Naive thymus-derived CD4-positive, alpha-beta T cell (primary cell): ENCODE measurements at regions of chr2 and their contacts with region 1.

Region 1: GRCh38 chr2:54723131-54723995 is at the start of gene EML6:
- DNase-seq: peak; percentile 94 to 99 (median 98)
- ATAC-seq: peak; percentile 98
- H3K4me3 ChIP-seq: peak within 1 kb of the TSS; percentile 77
- H3K4me3 Mint-ChIP-seq: peak within 1 kb of the TSS; percentile 87 to 97 (median 92)
- H3K27ac ChIP-seq: peak within 1 kb of the TSS; percentile 70
- H3K27ac Mint-ChIP-seq: peak within 1 kb of the TSS; percentile 50 to 90 (median 71)
- H3K4me1 ChIP-seq: peaks cover 0 to 6% of the 10 kb centered on the region in 2 donors
- H3K4me1 Mint-ChIP-seq: peaks cover 10 to 20% (median 12%) of the 10 kb centered on the region in 7 donors
- H3K27me3 ChIP-seq: peaks cover 0 to 5% of the 10 kb centered on the region in 2 donors
- H3K27me3 Mint-ChIP-seq: peaks cover 34 to 79% (median 51%) of the 10 kb centered on the region in 5 donors
- total RNA-seq, gene EML6: 0.32 to 2.5 (median 1.5) TPM

Region 2: GRCh38 chr2:53767405-53768241 is 955.7 kb before region 1 on chr2 and contains the start of gene CHAC2:
- CTCF ChIA-PET with region 1: no interaction called
- POLR2A ChIA-PET with region 1: no interaction called
- intact Hi-C with region 1: loop called (anchors 1 kb)
- DNase-seq: peak; percentile 74 to 86 (median 84)
- ATAC-seq: peak; percentile 93
- H3K4me3 ChIP-seq: peak within 1 kb of the TSS; percentile 80
- H3K4me3 Mint-ChIP-seq: peak within 1 kb of the TSS; percentile 88 to 98 (median 92)
- H3K27ac ChIP-seq: peak within 1 kb of the TSS; percentile 86
- H3K27ac Mint-ChIP-seq: peak within 1 kb of the TSS; percentile 60 to 99 (median 90)
- H3K4me1 ChIP-seq: peaks cover 0 to 8% of the 10 kb centered on the region in 2 donors
- H3K4me1 Mint-ChIP-seq: peaks cover 7 to 41% (median 33%) of the 10 kb centered on the region in 7 donors
- H3K27me3 ChIP-seq: no peaks in the 10 kb centered on the region
- H3K27me3 Mint-ChIP-seq: no peaks in the 10 kb centered on the region
- total RNA-seq, gene CHAC2: 0.29 to 12.1 (median 1.2) TPM

Region 3: GRCh38 chr2:54330162-54330925 is 393.0 kb before region 1 on chr2:
- CTCF ChIA-PET with region 1: no interaction called
- POLR2A ChIA-PET with region 1: no interaction called
- intact Hi-C with region 1: loop called (anchors 1 to 5 kb)
- DNase-seq: peak; percentile 64 to 86 (median 82)
- ATAC-seq: peak; percentile 98
- H3K4me3 ChIP-seq: peak overlapping the region; percentile 74
- H3K4me3 Mint-ChIP-seq: peak overlapping the region; percentile 88 to 95 (median 91)
- H3K27ac ChIP-seq: peak overlapping the region; percentile 45
- H3K27ac Mint-ChIP-seq: peak overlapping the region; percentile 5 to 89 (median 76)
- H3K4me1 ChIP-seq: peaks cover 0 to 4% of the 10 kb centered on the region in 2 donors
- H3K4me1 Mint-ChIP-seq: peaks cover 6 to 16% (median 9%) of the 10 kb centered on the region in 7 donors
- H3K27me3 ChIP-seq: peaks cover 0 to 5% of the 10 kb centered on the region in 2 donors
- H3K27me3 Mint-ChIP-seq: peaks cover 7 to 39% (median 14%) of the 10 kb centered on the region in 5 donors

Region 4: GRCh38 chr2:54680397-54681041 is 42.8 kb before region 1 on chr2:
- CTCF ChIA-PET with region 1: no interaction called
- POLR2A ChIA-PET with region 1: no interaction called
- intact Hi-C with region 1: loop called in 1 of 2 experiments (anchors 1 kb)
- DNase-seq: peak in 1 of 9 donors; percentile 53
- ATAC-seq: peak; percentile 24
- H3K4me3 ChIP-seq: no peak overlapping the region
- H3K4me3 Mint-ChIP-seq: peak overlapping the region in 1 of 10 donors; percentile 91
- H3K27ac ChIP-seq: no peak overlapping the region
- H3K27ac Mint-ChIP-seq: peak overlapping the region in 1 of 9 donors; percentile 82
- H3K4me1 ChIP-seq: no peaks in the 10 kb centered on the region
- H3K4me1 Mint-ChIP-seq: peaks cover 4 to 58% (median 7%) of the 10 kb centered on the region in 7 donors
- H3K27me3 ChIP-seq: no peaks in the 10 kb centered on the region
- H3K27me3 Mint-ChIP-seq: peaks cover 0 to 51% (median 4%) of the 10 kb centered on the region in 5 donors

Region 5: GRCh38 chr2:55133467-55134315 is 410.3 kb after region 1 on chr2:
- CTCF ChIA-PET with region 1: no interaction called
- POLR2A ChIA-PET with region 1: no interaction called
- intact Hi-C with region 1: loop called (anchors 2 kb)
- DNase-seq: peak; percentile 17 to 78 (median 52)
- ATAC-seq: peak; percentile 91
- H3K4me3 ChIP-seq: peak overlapping the region; percentile 55
- H3K4me3 Mint-ChIP-seq: peak overlapping the region; percentile 83 to 94 (median 88)
- H3K27ac ChIP-seq: peak overlapping the region; percentile 76
- H3K27ac Mint-ChIP-seq: peak overlapping the region; percentile 91 to 98 (median 97)
- H3K4me1 ChIP-seq: peaks cover 14 to 22% of the 10 kb centered on the region in 2 donors
- H3K4me1 Mint-ChIP-seq: peaks cover 19 to 49% (median 39%) of the 10 kb centered on the region in 7 donors
- H3K27me3 ChIP-seq: no peaks in the 10 kb centered on the region
- H3K27me3 Mint-ChIP-seq: no peaks in the 10 kb centered on the region

Region 6: DNA sequence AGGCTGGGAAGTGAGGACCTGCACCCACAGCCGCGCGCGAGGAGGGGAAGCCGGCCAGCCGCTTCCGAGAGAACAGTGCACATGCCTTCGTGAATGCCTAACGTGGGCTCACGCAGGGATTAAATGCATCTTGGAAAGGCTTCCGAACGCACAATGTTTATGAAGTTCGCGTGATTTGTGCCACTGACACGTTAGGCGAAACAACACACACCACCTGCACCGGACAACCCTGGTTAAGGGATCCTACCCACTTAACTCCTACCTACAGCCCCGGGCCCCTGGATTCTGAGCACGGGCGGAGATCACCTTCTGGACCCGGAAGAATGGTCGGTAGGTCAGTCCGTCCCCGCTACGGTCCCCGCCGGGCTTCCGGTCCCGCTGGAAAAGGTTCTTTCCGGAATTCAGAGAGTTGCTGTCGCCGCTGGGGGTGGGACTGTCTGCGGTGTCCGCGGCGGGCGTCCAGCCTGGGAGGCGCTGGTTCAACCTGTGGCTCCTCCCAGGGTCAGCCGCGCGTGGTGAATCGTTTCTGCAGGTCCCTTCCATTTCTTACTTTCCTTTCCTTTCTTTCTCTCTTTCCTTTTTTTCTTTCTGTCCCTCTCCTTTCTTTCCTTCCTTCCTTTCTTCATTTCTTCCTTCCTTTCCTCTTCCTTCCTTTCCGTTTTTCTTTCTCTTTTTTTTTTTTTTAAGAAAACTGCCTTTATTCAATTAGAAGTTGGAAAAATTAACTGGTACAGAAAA is 545.7 kb after region 1 on chr2 and contains the start of gene MTIF2:
- CTCF ChIA-PET with region 1: no interaction called
- POLR2A ChIA-PET with region 1: no interaction called
- intact Hi-C with region 1: loop called in 1 of 2 experiments (anchors 1 kb)
- DNase-seq: peak; percentile 64 to 90 (median 75)
- ATAC-seq: peak; percentile 97
- H3K4me3 ChIP-seq: peak within 1 kb of the TSS; percentile 84
- H3K4me3 Mint-ChIP-seq: peak within 1 kb of the TSS; percentile 78 to 97 (median 94)
- H3K27ac ChIP-seq: peak within 1 kb of the TSS; percentile 79
- H3K27ac Mint-ChIP-seq: peak within 1 kb of the TSS; percentile 94 to 97 (median 96)
- H3K4me1 ChIP-seq: peaks cover 13 to 16% of the 10 kb centered on the region in 2 donors
- H3K4me1 Mint-ChIP-seq: peaks cover 15 to 35% (median 27%) of the 10 kb centered on the region in 7 donors
- H3K27me3 ChIP-seq: no peaks in the 10 kb centered on the region
- H3K27me3 Mint-ChIP-seq: peaks cover 0 to 5% (median 0%) of the 10 kb centered on the region in 5 donors
- total RNA-seq, gene MTIF2: 23.0 to 35.5 (median 28.0) TPM

Region 7: DNA sequence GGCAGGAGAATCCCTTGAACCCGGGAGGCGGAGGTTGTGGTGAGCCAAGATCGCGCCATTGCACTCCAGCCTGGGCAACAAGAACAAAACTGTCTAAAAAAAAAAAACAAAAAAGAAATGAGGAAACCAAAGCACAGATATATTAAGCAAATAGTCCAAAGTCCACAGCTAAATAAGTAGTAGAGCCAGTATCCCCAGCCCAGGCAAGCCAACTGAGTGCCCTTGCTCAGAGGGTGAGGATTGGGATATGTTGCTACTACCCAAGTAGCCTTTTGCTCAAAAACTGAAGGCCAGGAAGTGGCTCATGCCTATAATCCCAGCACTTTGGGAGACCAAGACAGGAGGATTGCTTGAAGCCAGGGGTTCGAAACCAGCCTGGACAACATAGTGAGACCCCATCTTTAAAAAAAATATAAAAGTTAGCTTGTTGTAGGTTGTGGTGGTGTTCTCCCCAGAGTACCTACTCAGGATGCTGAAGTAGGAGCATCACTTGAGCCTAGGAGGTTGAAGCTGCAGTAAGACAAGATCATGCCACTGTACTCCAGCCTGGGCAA is 801.6 kb after region 1 on chr2:
- CTCF ChIA-PET with region 1: no interaction called
- POLR2A ChIA-PET with region 1: no interaction called
- intact Hi-C with region 1: no loop called
- DNase-seq: no peak
- ATAC-seq: no peak
- H3K4me3 ChIP-seq: no peak overlapping the region
- H3K4me3 Mint-ChIP-seq: no peak overlapping the region
- H3K27ac ChIP-seq: no peak overlapping the region
- H3K27ac Mint-ChIP-seq: peak overlapping the region in 1 of 9 donors; percentile 46
- H3K4me1 ChIP-seq: peaks cover 0 to 3% of the 10 kb centered on the region in 2 donors
- H3K4me1 Mint-ChIP-seq: peaks cover 7 to 23% (median 16%) of the 10 kb centered on the region in 7 donors
- H3K27me3 ChIP-seq: no peaks in the 10 kb centered on the region
- H3K27me3 Mint-ChIP-seq: no peaks in the 10 kb centered on the region

Region 8: DNA sequence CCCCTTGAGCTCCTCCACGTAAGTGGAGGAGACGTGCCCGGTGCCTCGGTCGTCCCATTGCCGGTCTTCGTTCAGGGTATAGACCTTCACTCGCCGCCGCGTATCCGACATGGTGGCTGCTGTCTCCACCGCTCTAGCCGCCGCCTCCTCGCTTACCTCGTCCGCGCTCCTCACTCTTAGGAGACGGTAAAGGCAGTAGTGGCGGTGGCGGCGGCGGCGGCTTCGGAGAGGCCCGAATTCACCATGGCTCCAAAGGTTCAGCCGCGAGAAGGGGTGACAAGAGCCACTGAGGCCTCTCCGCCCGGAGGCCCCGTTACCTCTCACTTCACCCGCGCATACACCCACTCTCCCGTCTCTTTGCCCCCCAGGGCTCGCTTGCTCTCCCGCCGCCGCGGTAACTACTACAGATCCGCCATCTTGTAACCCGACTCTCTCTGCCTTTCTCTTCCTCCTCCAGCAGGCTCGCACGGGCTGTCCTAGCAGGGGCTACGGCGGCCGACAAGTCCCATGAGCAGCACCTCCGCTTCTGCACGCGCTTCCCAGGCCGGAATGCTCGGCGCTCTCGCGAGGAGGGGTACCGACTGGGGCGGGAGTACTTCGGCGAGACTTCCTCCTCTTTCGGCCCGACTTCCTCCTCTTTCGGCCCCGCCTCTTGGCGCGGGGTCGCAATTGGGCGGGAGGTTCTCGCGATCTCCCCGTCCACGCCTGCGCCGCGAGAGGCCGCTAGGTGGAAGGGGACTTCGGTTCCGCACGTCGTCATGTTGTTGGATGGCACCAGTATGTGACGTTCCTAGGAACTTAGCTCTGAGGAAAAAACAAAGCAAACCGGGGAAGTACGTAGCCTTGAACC is 894.0 kb after region 1 on chr2 and contains the start of gene PPP4R3B:
- CTCF ChIA-PET with region 1: no interaction called
- POLR2A ChIA-PET with region 1: interaction called, 4 read pairs
- intact Hi-C with region 1: loop called in 1 of 2 experiments (anchors 1 kb)
- DNase-seq: peak; percentile 94 to 100 (median 99)
- ATAC-seq: peak; percentile 94
- H3K4me3 ChIP-seq: peak within 1 kb of the TSS; percentile 83
- H3K4me3 Mint-ChIP-seq: no peak within 1 kb of the TSS
- H3K27ac ChIP-seq: peak within 1 kb of the TSS; percentile 99
- H3K27ac Mint-ChIP-seq: no peak within 1 kb of the TSS
- H3K4me1 ChIP-seq: peaks cover 33 to 46% of the 10 kb centered on the region in 2 donors
- H3K4me1 Mint-ChIP-seq: peaks cover 23 to 67% (median 30%) of the 10 kb centered on the region in 7 donors
- H3K27me3 ChIP-seq: no peaks in the 10 kb centered on the region
- H3K27me3 Mint-ChIP-seq: no peaks in the 10 kb centered on the region
- total RNA-seq, gene PPP4R3B: 67.2 to 113 (median 88.0) TPM